Activated CD4-positive, alpha-beta T cell treated with anti-CD3 and anti-CD28 coated beads, Interleukin-2, amount 10 ng/mL, durations not matched to agents 7 days and 5 days (primary cell): ENCODE measurements at regions of chr1 and their contacts with region 1.

Region 1: DNA sequence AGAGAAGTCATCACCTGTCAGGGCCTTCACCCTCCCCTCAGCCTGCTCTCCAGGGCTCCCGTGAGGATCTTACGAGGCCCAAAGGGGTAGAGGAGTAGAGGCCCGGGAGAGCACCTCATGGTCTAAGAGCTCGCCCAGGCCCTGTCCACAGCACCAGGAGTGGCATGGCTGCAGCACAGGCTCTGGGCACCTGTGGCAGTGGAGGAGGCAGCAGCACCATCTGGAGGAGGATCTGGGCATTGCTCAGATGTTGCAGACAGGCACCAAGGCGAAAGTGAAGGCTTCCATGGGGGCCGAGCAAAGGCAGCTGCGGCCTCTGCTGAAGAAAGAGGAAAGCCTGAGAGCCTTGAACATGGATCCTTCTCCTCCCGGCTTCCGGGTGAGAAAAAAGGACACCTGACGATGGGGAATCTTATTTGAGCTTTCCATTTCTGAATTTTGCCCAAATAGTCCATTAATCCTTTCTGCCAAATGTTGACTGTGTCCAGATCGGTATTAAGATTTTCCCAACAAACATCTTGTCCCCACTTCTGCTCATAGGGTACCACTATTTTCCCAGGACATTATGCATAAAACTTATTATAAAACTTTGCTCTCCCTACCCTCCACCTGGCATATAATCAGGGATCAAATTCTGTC is 604.7 kb downstream of the PTPRC start:
- DNase-seq: peak; percentile 76
- H3K4me3 Mint-ChIP-seq: no peak overlapping the region
- H3K27ac Mint-ChIP-seq: peak overlapping the region; percentile 42
- H3K4me1 Mint-ChIP-seq: peaks cover 16% of the 10 kb centered on the region
- H3K27me3 Mint-ChIP-seq: peaks cover 14% of the 10 kb centered on the region

Region 2: GRCh38 chr1:199113265-199113869 is 130.2 kb before region 1 on chr1:
- CTCF ChIA-PET with region 1: interaction called, 10 read pairs
- POLR2A ChIA-PET with region 1: no interaction called
- DNase-seq: peak; percentile 59
- H3K4me3 Mint-ChIP-seq: no peak overlapping the region
- H3K27ac Mint-ChIP-seq: peak overlapping the region; percentile 51
- H3K4me1 Mint-ChIP-seq: peaks cover 12% of the 10 kb centered on the region
- H3K27me3 Mint-ChIP-seq: no peaks in the 10 kb centered on the region

Region 3: GRCh38 chr1:199260801-199261200 is 17.3 kb after region 1 on chr1:
- CTCF ChIA-PET with region 1: no interaction called
- POLR2A ChIA-PET with region 1: no interaction called
- DNase-seq: no peak
- H3K4me3 Mint-ChIP-seq: no peak overlapping the region
- H3K27ac Mint-ChIP-seq: no peak overlapping the region
- H3K4me1 Mint-ChIP-seq: no peaks in the 10 kb centered on the region
- H3K27me3 Mint-ChIP-seq: peaks cover 14% of the 10 kb centered on the region